AG04449 (cell line): ENCODE measurements at regions of chr7 and their contacts with region 1.

Region 1: GRCh38 chr7:43700059-43700501 is 29.2 kb downstream of the COA1 start:
- DNase-seq: no peak
- H3K4me3 ChIP-seq: no peak overlapping the region
- CTCF ChIP-seq: peak; percentile 22

Region 2: GRCh38 chr7:43572516-43573049 is 127.5 kb before region 1 on chr7:
- CTCF ChIA-PET with region 1: interaction called, 497 read pairs
- POLR2A ChIA-PET with region 1: no interaction called
- DNase-seq: peak; percentile 100
- H3K4me3 ChIP-seq: no peak overlapping the region
- CTCF ChIP-seq: no peak

Region 3: DNA sequence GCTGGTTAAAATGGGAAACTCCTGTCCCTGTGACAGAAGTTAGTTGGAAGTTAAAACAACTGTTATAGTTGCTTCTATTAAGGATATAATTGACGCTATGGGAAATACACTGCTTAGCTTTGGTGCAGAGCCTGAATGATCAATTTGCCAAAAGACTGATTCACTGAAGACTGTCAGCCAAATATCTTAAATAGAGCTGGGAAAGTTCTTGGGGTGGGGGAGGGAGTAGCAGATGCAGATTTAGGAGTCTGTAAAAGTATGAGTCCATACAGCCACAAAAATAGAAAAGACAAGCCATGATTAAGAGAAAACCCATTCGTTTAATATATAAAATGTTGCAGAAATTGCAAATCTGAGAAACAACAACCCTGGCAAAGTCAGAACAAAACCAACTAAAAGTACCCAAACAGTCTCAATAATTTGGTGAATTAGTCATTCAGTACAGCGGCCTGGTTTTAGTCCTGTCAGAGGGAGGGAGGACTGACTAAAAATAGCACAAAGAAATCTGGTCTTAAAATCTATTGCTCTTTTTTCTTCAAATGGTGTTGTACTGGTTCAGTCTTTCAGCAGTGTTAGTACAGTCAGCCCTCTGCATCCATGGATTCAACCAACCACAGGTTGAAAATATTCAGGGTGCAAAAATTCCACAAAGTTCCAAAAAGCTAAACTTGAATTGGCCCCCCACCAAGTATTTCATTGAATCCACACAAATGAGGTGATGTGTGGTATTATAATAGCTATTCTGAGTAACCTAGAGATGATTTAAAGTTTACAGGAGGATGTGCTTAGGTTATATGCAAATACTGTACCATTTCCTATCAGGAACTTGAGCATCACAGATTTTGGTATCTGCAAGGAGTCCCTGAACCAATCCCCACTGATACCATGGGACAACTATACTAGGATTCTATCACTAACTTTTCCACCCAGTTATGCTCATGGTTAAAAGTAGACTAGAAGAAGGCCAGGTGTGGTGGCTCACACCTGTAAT is 87.2 kb before region 1 on chr7:
- CTCF ChIA-PET with region 1: interaction called, 59 read pairs
- POLR2A ChIA-PET with region 1: no interaction called
- DNase-seq: peak; percentile 28
- H3K4me3 ChIP-seq: no peak overlapping the region
- CTCF ChIP-seq: no peak

Region 4: GRCh38 chr7:43631559-43631958 is 68.5 kb before region 1 on chr7:
- CTCF ChIA-PET with region 1: interaction called, 15 read pairs
- POLR2A ChIA-PET with region 1: interaction called, 3 read pairs
- DNase-seq: no peak
- H3K4me3 ChIP-seq: no peak overlapping the region
- CTCF ChIP-seq: no peak

Region 5: GRCh38 chr7:43647673-43648472 is 52.2 kb before region 1 on chr7:
- CTCF ChIA-PET with region 1: interaction called, 38 read pairs
- POLR2A ChIA-PET with region 1: interaction called, 9 read pairs
- DNase-seq: peak; percentile 99
- H3K4me3 ChIP-seq: peak overlapping the region; percentile 44
- CTCF ChIP-seq: no peak

Region 6: DNA sequence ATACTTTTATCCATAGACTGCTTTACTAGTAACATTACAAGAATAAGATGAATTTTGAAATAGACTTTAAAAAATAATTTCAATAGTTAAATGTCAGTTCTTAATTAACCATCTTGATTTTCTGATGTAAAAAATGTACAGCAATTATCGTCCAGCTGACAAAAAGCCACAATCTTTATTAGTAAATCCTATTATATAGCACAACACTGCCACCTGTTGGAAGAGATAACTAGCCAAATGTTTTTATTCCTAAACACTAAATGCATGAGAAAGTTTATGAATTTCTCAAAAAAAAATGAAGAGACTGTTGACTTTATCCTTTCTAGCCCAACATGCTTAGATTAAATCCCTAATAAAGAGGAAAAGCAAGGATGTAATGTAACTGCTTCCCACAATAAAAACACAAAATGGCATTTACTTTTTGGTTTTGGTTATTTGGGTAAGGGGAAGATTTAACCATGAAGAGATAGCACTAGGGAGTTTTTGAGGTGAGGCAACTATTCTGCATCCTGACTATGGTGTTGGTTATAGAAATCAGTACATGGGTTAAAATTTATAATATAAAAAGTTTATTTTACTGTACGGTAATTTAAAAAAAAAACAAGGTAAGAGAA is 21.2 kb after region 1 on chr7:
- CTCF ChIA-PET with region 1: interaction called, 57 read pairs
- POLR2A ChIA-PET with region 1: no interaction called
- DNase-seq: no peak
- H3K4me3 ChIP-seq: no peak overlapping the region
- CTCF ChIP-seq: no peak